HepG2 (cell line): ENCODE measurements at regions of chr17 and their contacts with region 1.

Region 1: GRCh38 chr17:8753976-8754440 is 4.3 kb downstream of the SPDYE4 start:
- DNase-seq: peak; percentile 34
- ATAC-seq: peak; percentile 83
- H3K4me3 ChIP-seq: no peak overlapping the region
- H3K27ac ChIP-seq: no peak overlapping the region
- H3K4me1 ChIP-seq: no peaks in the 10 kb centered on the region
- H3K27me3 ChIP-seq: peaks cover 8 to 53% of the 10 kb centered on the region in 2 experiments
- CTCF ChIP-seq: peak; percentile 56
- EP300 ChIP-seq: no peak
- POLR2A ChIP-seq: no peak
- RAD21 ChIP-seq: no peak

Region 2: GRCh38 chr17:8345052-8345682 is 408.8 kb before region 1 on chr17:
- CTCF ChIA-PET with region 1: no interaction called
- POLR2A ChIA-PET with region 1: no interaction called
- in situ Hi-C with region 1: no loop called
- intact Hi-C with region 1: no loop called
- DNase-seq: no peak
- ATAC-seq: peak; percentile 43; the same call in 1 of the 3 replicates
- H3K4me3 ChIP-seq: no peak overlapping the region
- H3K27ac ChIP-seq: no peak overlapping the region
- H3K4me1 ChIP-seq: no peaks in the 10 kb centered on the region
- H3K27me3 ChIP-seq: peaks cover 0 to 19% of the 10 kb centered on the region in 2 experiments; a peak in 3 of 5 replicates
- CTCF ChIP-seq: no peak
- EP300 ChIP-seq: no peak
- POLR2A ChIP-seq: no peak
- RAD21 ChIP-seq: no peak

Region 3: GRCh38 chr17:8776881-8777280 is 22.9 kb after region 1 on chr17:
- CTCF ChIA-PET with region 1: no interaction called
- POLR2A ChIA-PET with region 1: no interaction called
- in situ Hi-C with region 1: no loop called
- intact Hi-C with region 1: no loop called
- DNase-seq: no peak
- ATAC-seq: no peak
- H3K4me3 ChIP-seq: no peak overlapping the region
- H3K27ac ChIP-seq: no peak overlapping the region
- H3K4me1 ChIP-seq: no peaks in the 10 kb centered on the region
- H3K27me3 ChIP-seq: peaks cover 1 to 5% of the 10 kb centered on the region in 2 experiments; a peak in 1 of 5 replicates
- CTCF ChIP-seq: no peak
- EP300 ChIP-seq: no peak
- POLR2A ChIP-seq: no peak
- RAD21 ChIP-seq: no peak

Region 4: GRCh38 chr17:8788998-8789397 is 35.0 kb after region 1 on chr17:
- CTCF ChIA-PET with region 1: interaction called, 4 read pairs
- POLR2A ChIA-PET with region 1: no interaction called
- in situ Hi-C with region 1: no loop called
- intact Hi-C with region 1: loop called (anchors 1 kb)
- DNase-seq: peak; percentile 54
- ATAC-seq: peak; percentile 56; the same call in 2 of the 3 replicates
- H3K4me3 ChIP-seq: no peak overlapping the region
- H3K27ac ChIP-seq: no peak overlapping the region
- H3K4me1 ChIP-seq: peaks cover 18% of the 10 kb centered on the region
- H3K27me3 ChIP-seq: peaks cover 2 to 61% of the 10 kb centered on the region in 2 experiments; a peak in 4 of 5 replicates
- CTCF ChIP-seq: no peak
- EP300 ChIP-seq: peak in 1 of 2 experiments; percentile 68; a peak in 1 of 4 replicates
- POLR2A ChIP-seq: no peak
- RAD21 ChIP-seq: no peak